Activated CD4-positive, alpha-beta T cell treated with anti-CD3 and anti-CD28 coated beads, Interleukin-2, amount 10 ng/mL, durations not matched to agents 7 days and 5 days (primary cell): ENCODE measurements at regions of chr6 and their contacts with region 1.

Region 1: DNA sequence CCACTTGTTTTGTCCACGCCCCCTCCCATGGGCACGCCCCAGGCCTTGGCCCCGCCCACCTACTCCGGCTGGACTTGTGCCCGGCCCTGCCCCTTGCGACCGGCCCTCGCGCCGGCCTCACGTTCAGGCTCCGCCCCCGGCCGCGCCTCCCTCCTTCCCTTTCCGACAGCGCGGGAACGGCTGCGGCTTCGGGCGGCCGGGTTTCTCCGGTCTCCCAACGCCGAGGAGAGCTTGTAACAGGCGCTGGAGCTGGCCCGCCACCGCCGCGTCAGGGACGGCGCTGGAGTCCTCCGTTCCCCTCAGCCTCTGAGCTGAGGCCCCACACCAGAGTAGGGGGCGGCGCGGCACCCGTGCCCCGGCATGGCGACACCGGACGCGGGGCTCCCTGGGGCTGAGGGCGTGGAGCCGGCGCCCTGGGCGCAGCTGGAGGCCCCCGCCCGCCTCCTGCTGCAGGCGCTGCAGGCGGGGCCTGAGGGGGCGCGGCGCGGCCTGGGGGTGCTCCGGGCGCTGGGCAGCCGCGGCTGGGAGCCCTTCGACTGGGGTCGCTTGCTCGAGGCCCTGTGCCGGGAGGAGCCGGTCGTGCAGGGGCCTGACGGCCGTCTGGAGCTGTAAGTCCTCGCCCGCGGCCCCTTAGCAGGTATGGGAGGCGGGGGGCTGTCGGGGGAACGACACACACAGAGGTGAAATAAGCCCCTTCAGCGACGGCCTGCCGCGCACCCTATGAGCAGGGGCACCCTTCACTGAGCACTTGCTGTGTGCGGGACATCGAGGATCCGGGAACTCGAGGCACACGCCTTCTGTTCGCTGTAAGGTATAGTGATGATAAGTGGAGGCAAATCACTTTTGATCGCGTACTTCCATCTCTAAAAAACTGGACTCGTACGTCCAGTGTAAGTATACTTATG is at the start of gene FANCE:
- DNase-seq: peak; percentile 91
- H3K4me3 Mint-ChIP-seq: peak within 1 kb of the TSS; percentile 81
- H3K27ac Mint-ChIP-seq: peak within 1 kb of the TSS; percentile 75
- H3K4me1 Mint-ChIP-seq: peaks cover 48% of the 10 kb centered on the region
- H3K27me3 Mint-ChIP-seq: peaks cover 9% of the 10 kb centered on the region
- total RNA-seq, gene FANCE: 11.7 to 13.0 TPM

Region 2: DNA sequence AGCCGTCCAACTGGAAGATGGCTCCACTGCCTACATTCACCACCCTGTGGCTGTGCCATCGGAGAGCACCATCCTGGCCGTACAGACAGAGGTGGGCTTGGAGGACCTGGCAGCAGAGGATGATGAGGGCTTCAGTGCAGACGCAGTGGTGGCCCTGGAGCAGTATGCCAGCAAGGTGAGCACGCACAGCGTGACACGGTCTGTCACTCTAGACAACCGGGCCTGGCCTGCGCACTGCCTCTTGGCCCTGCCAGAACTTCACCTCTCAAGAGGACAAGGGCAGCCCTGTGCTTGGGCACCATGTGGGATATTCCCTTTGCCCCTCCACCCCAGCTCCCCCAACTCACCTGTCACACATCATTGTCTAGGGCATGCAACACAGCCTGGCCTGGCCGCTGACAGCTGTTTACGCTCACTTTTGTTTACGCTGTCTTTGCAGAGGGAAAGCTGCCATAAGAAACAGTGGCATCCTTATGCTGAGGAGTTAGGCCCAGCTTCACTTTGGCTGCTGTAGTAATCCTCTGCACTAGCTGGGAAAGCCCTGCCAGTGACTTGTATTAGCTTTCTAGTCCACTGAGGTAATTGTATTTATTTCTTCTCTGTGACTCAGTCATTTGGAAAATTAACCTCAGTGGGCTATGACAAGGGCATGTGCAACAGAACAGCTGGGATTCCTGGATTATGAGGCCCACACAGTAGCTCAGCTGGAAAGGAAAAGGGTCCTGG is 164.6 kb before region 1 on chr6:
- CTCF ChIA-PET with region 1: interaction called, 11 read pairs
- POLR2A ChIA-PET with region 1: no interaction called
- DNase-seq: no peak
- H3K4me3 Mint-ChIP-seq: no peak overlapping the region
- H3K27ac Mint-ChIP-seq: no peak overlapping the region
- H3K4me1 Mint-ChIP-seq: no peaks in the 10 kb centered on the region
- H3K27me3 Mint-ChIP-seq: no peaks in the 10 kb centered on the region